CD8-positive, alpha-beta T cell (primary cell): ENCODE measurements at regions of chr1 and their contacts with region 1.

Region 1: GRCh38 chr1:13662493-13662892 is 37.5 kb upstream of the PRDM2 start:
- DNase-seq: no peak
- ATAC-seq: no peak
- H3K4me3 ChIP-seq: no peak overlapping the region
- H3K4me3 Mint-ChIP-seq: no peak overlapping the region
- H3K27ac ChIP-seq: no peak overlapping the region
- H3K27ac Mint-ChIP-seq: no peak overlapping the region
- H3K4me1 ChIP-seq: peaks cover 4% of the 10 kb centered on the region
- H3K4me1 Mint-ChIP-seq: peaks cover 5% of the 10 kb centered on the region
- H3K27me3 ChIP-seq: no peaks in the 10 kb centered on the region
- H3K27me3 Mint-ChIP-seq: peaks cover 5% of the 10 kb centered on the region
- CTCF ChIP-seq: no peak

Region 2: GRCh38 chr1:13513895-13514546 is 148.5 kb before region 1 on chr1 and contains the start of gene LRRC38:
- CTCF ChIA-PET with region 1: no interaction called
- POLR2A ChIA-PET with region 1: no interaction called
- intact Hi-C with region 1: no loop called
- DNase-seq: no peak
- ATAC-seq: no peak
- H3K4me3 ChIP-seq: no peak within 1 kb of the TSS
- H3K4me3 Mint-ChIP-seq: no peak within 1 kb of the TSS
- H3K27ac ChIP-seq: no peak within 1 kb of the TSS
- H3K27ac Mint-ChIP-seq: no peak within 1 kb of the TSS
- H3K4me1 ChIP-seq: no peaks in the 10 kb centered on the region
- H3K4me1 Mint-ChIP-seq: no peaks in the 10 kb centered on the region
- H3K27me3 ChIP-seq: peaks cover 0 to 3% of the 10 kb centered on the region in 2 experiments
- H3K27me3 Mint-ChIP-seq: peaks cover 15% of the 10 kb centered on the region
- CTCF ChIP-seq: no peak
- total RNA-seq, gene LRRC38: not detected

Region 3: DNA sequence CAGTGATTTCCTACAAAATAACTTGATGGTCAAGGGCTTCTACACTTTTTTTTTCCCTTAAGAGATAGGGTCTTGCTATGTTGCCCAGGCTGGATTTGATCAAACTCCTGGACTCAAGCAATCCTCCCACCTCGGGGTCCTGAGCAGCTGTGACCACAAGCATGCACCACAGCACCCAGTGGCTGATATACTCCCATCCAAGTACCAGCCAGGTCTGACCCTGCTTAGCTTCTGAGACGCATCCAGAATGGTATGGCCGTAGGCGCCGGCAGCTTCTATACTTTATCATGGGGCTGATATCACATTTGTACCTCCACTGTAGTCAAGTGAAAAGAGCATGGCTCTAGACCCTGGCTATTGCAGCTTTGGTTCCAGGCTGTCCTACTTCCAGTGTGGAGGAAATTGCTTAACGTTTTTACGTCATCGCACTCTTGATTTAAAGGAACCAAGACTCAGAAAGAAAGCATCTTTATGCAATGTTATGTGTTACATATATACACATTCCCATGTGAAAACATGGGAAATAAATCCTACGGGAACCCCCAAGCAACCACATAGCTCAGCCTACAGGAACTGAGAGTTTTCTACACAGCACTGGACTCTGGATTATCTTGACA is 39.4 kb before region 1 on chr1:
- CTCF ChIA-PET with region 1: no interaction called
- POLR2A ChIA-PET with region 1: no interaction called
- intact Hi-C with region 1: no loop called
- DNase-seq: no peak
- ATAC-seq: no peak
- H3K4me3 ChIP-seq: no peak overlapping the region
- H3K4me3 Mint-ChIP-seq: no peak overlapping the region
- H3K27ac ChIP-seq: no peak overlapping the region
- H3K27ac Mint-ChIP-seq: no peak overlapping the region
- H3K4me1 ChIP-seq: no peaks in the 10 kb centered on the region
- H3K4me1 Mint-ChIP-seq: no peaks in the 10 kb centered on the region
- H3K27me3 ChIP-seq: no peaks in the 10 kb centered on the region
- H3K27me3 Mint-ChIP-seq: peaks cover 16% of the 10 kb centered on the region
- CTCF ChIP-seq: no peak

Region 4: DNA sequence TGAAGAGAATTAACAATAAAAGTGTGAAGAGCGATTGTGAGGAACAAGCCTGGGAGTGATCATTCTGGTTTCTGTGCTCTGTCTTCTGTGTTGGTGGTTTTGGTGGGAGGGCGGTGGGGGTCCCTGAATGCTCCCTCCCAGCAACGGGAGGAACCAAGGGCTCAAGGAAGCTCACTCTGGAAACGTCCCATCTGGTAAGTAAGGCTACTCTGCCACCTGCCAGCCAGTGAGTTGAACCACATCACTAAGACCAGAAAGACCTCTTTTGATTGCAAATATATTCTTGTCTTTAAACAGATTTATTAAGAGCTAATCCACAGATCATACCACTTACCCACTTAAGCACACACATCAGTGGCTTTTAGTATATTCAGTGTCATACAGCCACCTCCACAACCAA is 162.5 kb after region 1 on chr1:
- CTCF ChIA-PET with region 1: interaction called, 15 read pairs
- POLR2A ChIA-PET with region 1: no interaction called
- intact Hi-C with region 1: loop called in 1 of 2 experiments (anchors 1 kb)
- DNase-seq: peak in 1 of 9 experiments; percentile 43
- ATAC-seq: no peak
- H3K4me3 ChIP-seq: no peak overlapping the region
- H3K4me3 Mint-ChIP-seq: no peak overlapping the region
- H3K27ac ChIP-seq: no peak overlapping the region
- H3K27ac Mint-ChIP-seq: peak overlapping the region; percentile 34
- H3K4me1 ChIP-seq: no peaks in the 10 kb centered on the region
- H3K4me1 Mint-ChIP-seq: no peaks in the 10 kb centered on the region
- H3K27me3 ChIP-seq: no peaks in the 10 kb centered on the region
- H3K27me3 Mint-ChIP-seq: peaks cover 4% of the 10 kb centered on the region
- CTCF ChIP-seq: no peak

Region 5: DNA sequence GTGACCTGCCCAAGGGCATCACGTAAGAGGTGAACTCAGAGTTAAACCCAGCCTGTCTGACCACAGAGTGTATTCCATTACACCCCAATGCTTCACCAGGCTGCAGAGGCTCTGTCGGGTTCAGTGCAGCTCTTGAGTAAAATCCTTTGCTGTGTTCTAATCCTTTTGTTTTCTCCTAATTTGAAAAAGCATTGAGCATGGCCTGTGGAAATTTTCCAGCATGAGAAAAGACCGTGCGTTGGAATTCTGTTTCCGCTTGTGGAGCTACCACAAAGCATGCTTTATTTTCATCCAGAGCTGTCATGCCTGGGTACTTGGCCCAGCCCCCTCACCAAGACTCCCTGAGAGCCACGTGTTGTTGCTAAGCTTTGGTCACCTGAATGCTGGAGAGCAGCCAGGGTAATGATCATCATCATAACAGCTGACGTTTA is 355.1 kb after region 1 on chr1:
- CTCF ChIA-PET with region 1: no interaction called
- POLR2A ChIA-PET with region 1: no interaction called
- intact Hi-C with region 1: no loop called
- DNase-seq: no peak
- ATAC-seq: no peak
- H3K4me3 ChIP-seq: no peak overlapping the region
- H3K4me3 Mint-ChIP-seq: no peak overlapping the region
- H3K27ac ChIP-seq: no peak overlapping the region
- H3K27ac Mint-ChIP-seq: no peak overlapping the region
- H3K4me1 ChIP-seq: no peaks in the 10 kb centered on the region
- H3K4me1 Mint-ChIP-seq: no peaks in the 10 kb centered on the region
- H3K27me3 ChIP-seq: no peaks in the 10 kb centered on the region
- H3K27me3 Mint-ChIP-seq: peaks cover 29% of the 10 kb centered on the region
- CTCF ChIP-seq: no peak